Thyroid gland (tissue), 4 donors: ENCODE measurements at regions of chr19 and their contacts with region 1.

Region 1: GRCh38 chr19:39497996-39498797 is 550 bp upstream of the DLL3 start:
- DNase-seq: peak; percentile 33 to 40
- H3K4me3 ChIP-seq: no peak overlapping the region
- H3K27ac ChIP-seq: no peak overlapping the region
- H3K4me1 ChIP-seq: peaks cover 0 to 24% of the 10 kb centered on the region in 2 donors
- H3K27me3 ChIP-seq: peaks cover 7% of the 10 kb centered on the region
- CTCF ChIP-seq: peak in 3 of 6 experiments; percentile 29 to 50 (median 46)
- POLR2A ChIP-seq: no peak

Region 2: DNA sequence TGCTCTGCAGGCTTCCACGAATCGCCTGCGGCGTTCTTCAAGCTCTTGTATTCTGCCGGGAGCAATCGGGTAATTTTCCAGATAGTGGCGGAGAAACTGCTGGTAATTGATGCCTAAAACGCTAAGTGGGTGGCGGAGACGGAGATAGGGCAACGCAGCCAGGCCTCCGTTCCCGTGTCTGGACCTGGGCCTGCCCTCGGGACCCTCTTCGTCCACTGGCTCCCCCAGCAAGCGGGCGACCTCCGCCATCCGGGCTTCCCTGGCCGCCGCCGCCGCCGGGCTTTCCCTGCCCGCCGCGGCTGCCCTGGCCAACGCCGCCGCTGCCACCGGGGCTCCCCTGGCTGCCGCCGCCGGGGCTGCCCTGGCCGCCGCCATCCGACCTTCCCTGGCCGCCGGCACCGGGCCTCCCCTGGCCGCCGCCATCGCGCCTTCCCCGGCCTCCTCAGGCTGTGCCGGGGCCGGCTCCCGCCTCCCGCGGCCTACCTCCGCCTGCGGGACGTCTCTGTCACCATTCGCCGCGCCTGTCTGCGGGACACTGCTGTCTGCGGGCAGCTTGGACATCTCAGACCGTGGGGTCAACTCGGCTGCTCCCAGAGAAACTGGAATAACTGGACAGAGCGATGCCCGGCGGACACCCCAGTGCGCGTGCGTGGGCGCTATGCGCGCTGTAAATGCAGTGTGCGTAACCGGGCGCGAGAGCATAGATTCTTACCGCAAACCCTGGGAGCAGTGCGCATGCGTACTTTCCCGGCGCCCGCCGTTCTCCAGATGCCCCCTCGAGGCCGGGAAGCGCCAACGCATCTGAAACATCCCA is 41.5 kb after region 1 on chr19 and contains the start of gene EID2:
- intact Hi-C with region 1: loop called (anchors 5 kb)
- DNase-seq: peak; percentile 95 to 96
- H3K4me3 ChIP-seq: peak within 1 kb of the TSS; percentile 23 to 87 (median 47)
- H3K27ac ChIP-seq: peak within 1 kb of the TSS; percentile 70 to 98 (median 88)
- H3K4me1 ChIP-seq: peaks cover 9 to 12% of the 10 kb centered on the region in 2 donors
- H3K27me3 ChIP-seq: no peaks in the 10 kb centered on the region
- CTCF ChIP-seq: peak; percentile 53 to 96 (median 82)
- POLR2A ChIP-seq: peak; percentile 49 to 94
- total RNA-seq, gene EID2: 15.3 to 24.4 (median 19.8) TPM